ENCODE measurements at regions of chr9 and their contacts with region 1.

Region 1: GRCh38 chr9:135718616-135719015 is 16.6 kb downstream of the KCNT1 start:
- DNase-seq: no peak
- H3K4me3 ChIP-seq: no peak overlapping the region
- CTCF ChIP-seq: no peak

Region 2: GRCh38 chr9:135369416-135369990 is 349.1 kb before region 1 on chr9:
- in situ Hi-C with region 1: loop called (anchors 10 kb)
- DNase-seq: no peak
- H3K4me3 ChIP-seq: no peak overlapping the region
- CTCF ChIP-seq: no peak

Region 3: DNA sequence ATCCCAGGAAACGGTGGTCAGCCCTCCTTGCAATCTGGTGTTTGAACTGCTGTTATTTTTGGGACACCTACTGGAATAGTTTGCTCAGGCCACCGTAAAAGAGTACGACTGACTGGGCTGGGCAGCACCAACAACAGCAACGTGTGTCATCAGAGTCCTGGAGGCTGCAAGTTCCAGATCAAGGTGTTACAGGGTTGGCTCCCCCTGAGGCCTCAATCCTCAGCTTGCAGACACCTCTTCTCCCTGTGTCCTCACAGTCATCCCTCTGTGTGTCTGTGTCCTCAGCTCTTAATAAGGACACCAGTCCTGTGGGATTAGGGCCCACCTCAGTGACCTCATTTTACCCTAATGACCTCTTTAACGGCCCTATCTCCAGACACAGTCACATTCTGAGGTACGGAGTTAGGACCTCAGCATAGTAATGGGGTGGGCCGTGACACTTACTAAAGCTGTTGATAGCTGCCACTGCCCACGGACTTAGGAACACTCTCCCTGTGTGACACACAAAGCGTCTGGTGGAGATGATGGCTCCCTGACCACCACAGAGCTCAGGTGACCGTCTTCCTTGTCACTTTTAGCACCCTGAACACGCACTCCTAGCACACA is 96.1 kb before region 1 on chr9:
- in situ Hi-C with region 1: no loop called
- DNase-seq: no peak
- H3K4me3 ChIP-seq: no peak overlapping the region
- CTCF ChIP-seq: no peak

Region 4: GRCh38 chr9:135655337-135655736 is 63.3 kb before region 1 on chr9:
- in situ Hi-C with region 1: loop called (anchors 10 kb)
- DNase-seq: no peak
- H3K4me3 ChIP-seq: no peak overlapping the region
- CTCF ChIP-seq: no peak

Region 5: DNA sequence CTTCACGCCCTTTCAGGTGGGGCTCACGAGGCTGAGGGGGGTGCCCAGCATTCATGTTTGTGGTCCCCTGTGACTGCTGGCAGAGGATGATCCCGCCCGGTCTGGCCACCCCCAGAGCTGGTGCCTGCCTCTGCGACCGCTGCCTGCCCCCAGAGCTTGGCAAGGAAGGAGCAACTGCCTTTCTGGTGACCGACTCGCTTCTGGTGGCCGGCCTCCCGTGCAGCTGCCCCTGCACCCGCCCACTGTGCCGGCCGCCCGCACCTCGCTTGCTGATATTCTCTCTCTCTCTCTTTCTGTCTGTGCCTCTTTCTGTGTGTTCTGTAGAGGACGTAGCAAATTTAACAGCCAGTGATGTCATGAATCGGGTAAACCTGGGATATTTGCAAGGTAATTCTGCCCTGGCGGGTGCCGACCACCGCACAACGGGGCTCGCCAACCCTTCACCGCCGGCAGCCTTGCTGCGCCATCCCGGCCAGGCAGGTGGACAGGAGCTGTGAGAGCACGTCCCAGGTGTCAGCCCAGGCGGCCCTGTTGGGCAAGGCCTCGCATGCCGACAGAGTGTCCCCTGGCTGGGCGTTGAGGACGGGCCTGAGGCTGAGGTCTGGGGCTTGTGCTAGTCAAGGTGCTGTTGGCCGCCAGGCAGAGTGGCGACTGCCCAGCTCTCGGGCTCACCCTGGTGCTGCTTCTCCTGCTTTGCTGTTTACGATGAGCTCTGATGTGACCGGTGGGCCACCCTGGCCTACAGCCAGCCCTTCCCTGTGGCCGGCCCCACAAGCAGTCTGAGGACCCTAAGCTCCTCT is 69.4 kb after region 1 on chr9:
- in situ Hi-C with region 1: loop called (anchors 5 kb)
- DNase-seq: no peak
- H3K4me3 ChIP-seq: no peak overlapping the region
- CTCF ChIP-seq: no peak

Region 6: DNA sequence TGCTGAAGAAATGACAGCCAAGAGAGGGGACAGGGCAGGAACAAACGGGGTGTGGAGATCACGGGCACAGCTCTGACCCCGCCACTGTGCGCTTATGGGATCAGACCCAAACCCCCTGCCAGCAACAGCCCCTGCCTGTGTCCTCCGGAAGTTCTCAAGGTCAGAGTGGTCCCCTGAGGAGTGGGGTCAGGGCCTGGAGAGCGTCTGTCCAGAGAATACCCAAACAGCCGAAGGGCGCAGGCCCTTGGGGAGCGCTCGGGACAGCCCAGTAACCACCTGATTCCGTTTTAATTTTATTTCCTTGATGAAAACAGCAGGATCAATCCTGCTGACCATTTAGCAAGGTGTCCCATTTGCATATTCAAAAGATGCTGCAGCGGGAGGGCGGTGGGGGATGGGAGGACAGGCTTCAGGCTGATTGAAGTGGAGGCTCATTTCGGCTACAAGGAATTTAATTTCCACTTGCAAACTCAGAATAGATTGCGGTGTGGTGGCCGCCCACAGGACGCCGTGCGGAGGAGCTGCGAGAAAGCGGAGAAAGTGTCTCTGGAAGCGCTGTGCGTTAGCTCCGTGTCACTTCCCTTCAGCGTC is 432.7 kb after region 1 on chr9:
- in situ Hi-C with region 1: loop called (anchors 10 kb)
- DNase-seq: no peak
- H3K4me3 ChIP-seq: no peak overlapping the region
- CTCF ChIP-seq: no peak